Thyroid gland (tissue), 4 donors: ENCODE measurements at regions of chr5 and their contacts with region 1.

Region 1: DNA sequence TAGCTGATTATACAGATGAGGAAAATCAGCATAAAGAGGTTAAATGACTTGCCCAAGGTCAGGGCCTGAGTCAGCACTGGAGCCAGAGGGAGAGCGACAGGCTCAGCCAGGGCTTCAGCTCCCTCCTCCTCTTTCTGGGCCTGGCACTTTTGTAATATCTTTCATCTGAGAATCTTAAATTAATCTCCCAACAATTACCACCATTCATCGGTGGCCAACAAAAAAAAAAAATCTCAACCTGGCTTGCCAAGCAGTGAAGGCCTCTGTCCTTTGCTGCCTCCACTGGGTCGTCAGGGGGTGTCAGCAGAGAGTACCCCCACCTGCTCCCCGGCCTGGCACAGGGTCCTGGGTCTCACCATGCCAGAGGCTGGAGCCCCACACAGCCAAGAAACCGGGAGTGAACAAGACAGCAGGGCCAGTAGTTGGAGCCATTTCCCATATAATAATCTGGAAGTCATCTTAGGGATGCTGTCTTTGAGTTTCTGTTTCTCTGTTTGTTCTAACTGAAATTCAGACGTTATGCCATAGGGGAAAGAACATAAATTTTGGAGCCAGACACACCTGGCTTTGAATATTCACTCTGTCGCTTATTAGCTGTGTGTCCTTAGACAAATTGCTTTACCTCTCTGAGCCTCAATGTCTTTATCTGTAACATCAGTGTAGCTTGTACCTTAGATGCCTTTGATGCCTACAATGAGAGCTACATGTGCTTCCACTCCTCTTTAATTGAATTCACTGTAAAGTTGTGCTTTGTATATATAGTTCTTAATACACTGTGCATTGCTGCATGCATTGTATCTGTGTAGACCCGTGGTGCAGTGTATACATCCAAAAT is 299.9 kb upstream of the MSX2 start:
- DNase-seq: no peak
- H3K4me3 ChIP-seq: no peak overlapping the region
- H3K27ac ChIP-seq: no peak overlapping the region
- H3K4me1 ChIP-seq: no peaks in the 10 kb centered on the region
- H3K27me3 ChIP-seq: no peaks in the 10 kb centered on the region
- CTCF ChIP-seq: no peak
- POLR2A ChIP-seq: no peak

Region 2: GRCh38 chr5:174596429-174596828 is 172.0 kb after region 1 on chr5:
- intact Hi-C with region 1: no loop called
- DNase-seq: no peak
- H3K4me3 ChIP-seq: no peak overlapping the region
- H3K27ac ChIP-seq: no peak overlapping the region
- H3K4me1 ChIP-seq: no peaks in the 10 kb centered on the region
- H3K27me3 ChIP-seq: no peaks in the 10 kb centered on the region
- CTCF ChIP-seq: no peak
- POLR2A ChIP-seq: no peak

Region 3: GRCh38 chr5:174935854-174936474 is 511.5 kb after region 1 on chr5:
- intact Hi-C with region 1: loop called (anchors 10 kb)
- DNase-seq: peak; percentile 31 to 51
- H3K4me3 ChIP-seq: no peak overlapping the region
- H3K27ac ChIP-seq: no peak overlapping the region
- H3K4me1 ChIP-seq: no peaks in the 10 kb centered on the region
- H3K27me3 ChIP-seq: no peaks in the 10 kb centered on the region
- CTCF ChIP-seq: peak; percentile 53 to 93 (median 71)
- POLR2A ChIP-seq: no peak